ENCODE measurements at regions of chr2 and their contacts with region 1.

Region 1: GRCh38 chr2:20661067-20661980 is 5.6 kb upstream of the GDF7 start:
- DNase-seq: peak; percentile 68 to 71 (median 69)
- ATAC-seq: peak; percentile 78
- H3K4me3 ChIP-seq: no peak overlapping the region
- H3K27ac ChIP-seq: no peak overlapping the region
- H3K4me1 ChIP-seq: peaks cover 19% of the 10 kb centered on the region
- H3K27me3 ChIP-seq: peaks cover 0 to 7% of the 10 kb centered on the region in 2 donors
- CTCF ChIP-seq: peak; percentile 88 to 97 (median 93)
- POLR2A ChIP-seq: no peak

Region 2: GRCh38 chr2:19769513-19769912 is 891.8 kb before region 1 on chr2:
- intact Hi-C with region 1: no loop called
- DNase-seq: no peak
- ATAC-seq: no peak
- H3K4me3 ChIP-seq: no peak overlapping the region
- H3K27ac ChIP-seq: no peak overlapping the region
- H3K4me1 ChIP-seq: no peaks in the 10 kb centered on the region
- H3K27me3 ChIP-seq: no peaks in the 10 kb centered on the region
- CTCF ChIP-seq: peak in 2 of 7 experiments; percentile 7 to 9
- POLR2A ChIP-seq: no peak

Region 3: GRCh38 chr2:20264629-20265028 is 396.7 kb before region 1 on chr2:
- intact Hi-C with region 1: no loop called
- DNase-seq: no peak
- ATAC-seq: no peak
- H3K4me3 ChIP-seq: no peak overlapping the region
- H3K27ac ChIP-seq: no peak overlapping the region
- H3K4me1 ChIP-seq: no peaks in the 10 kb centered on the region
- H3K27me3 ChIP-seq: no peaks in the 10 kb centered on the region
- CTCF ChIP-seq: no peak
- POLR2A ChIP-seq: no peak

Region 4: DNA sequence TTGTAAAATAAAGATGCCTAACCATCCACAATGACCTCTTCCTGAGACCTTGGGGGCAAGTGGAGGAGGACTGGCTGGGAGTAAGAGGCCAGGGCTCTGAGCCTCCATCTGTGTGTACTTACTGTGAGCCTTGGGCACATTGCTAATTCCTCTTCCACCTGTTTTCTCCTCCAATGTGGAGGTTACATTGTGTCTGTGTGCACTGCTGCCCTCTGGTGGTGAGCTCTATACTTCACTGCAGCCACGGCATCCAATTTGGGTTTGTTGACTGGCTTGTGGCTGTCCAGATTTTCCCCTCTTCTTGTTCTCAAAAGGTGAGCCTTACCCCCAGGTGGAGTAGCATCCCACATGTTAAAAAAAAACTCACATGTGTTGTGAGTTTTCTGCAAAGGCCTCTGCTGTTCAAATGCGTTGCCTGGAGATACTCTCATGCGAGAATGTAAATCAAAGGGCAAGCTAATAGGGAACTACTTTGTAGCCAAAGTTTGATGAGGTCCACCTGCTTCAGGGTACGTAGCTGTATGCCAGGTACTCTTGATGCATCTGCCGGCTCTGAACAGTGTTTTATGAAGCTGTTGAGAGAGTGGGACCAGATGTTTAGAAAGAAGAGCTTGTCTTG is 301.7 kb after region 1 on chr2:
- intact Hi-C with region 1: loop called (anchors 5 kb)
- DNase-seq: peak; percentile 71 to 82 (median 74)
- ATAC-seq: peak; percentile 75
- H3K4me3 ChIP-seq: no peak overlapping the region
- H3K27ac ChIP-seq: no peak overlapping the region
- H3K4me1 ChIP-seq: no peaks in the 10 kb centered on the region
- H3K27me3 ChIP-seq: no peaks in the 10 kb centered on the region
- CTCF ChIP-seq: peak; percentile 81 to 92 (median 85)
- POLR2A ChIP-seq: no peak

Region 5: GRCh38 chr2:22248851-22249250 is 1587.5 kb after region 1 on chr2:
- intact Hi-C with region 1: no loop called
- DNase-seq: no peak
- ATAC-seq: no peak
- H3K4me3 ChIP-seq: no peak overlapping the region
- H3K27ac ChIP-seq: no peak overlapping the region
- H3K4me1 ChIP-seq: no peaks in the 10 kb centered on the region
- H3K27me3 ChIP-seq: no peaks in the 10 kb centered on the region
- CTCF ChIP-seq: no peak
- POLR2A ChIP-seq: no peak

Measured in body of pancreas (tissue), 4 donors.